WTC11 (cell line): ENCODE measurements at regions of chr1 and their contacts with region 1.

Region 1: GRCh38 chr1:17011439-17012307 is at the start of gene ATP13A2:
- DNase-seq: peak; percentile 94
- ATAC-seq: peak; percentile 85
- H3K4me3 Mint-ChIP-seq: peak within 1 kb of the TSS; percentile 85
- H3K27ac Mint-ChIP-seq: peak within 1 kb of the TSS; percentile 84
- H3K4me1 Mint-ChIP-seq: peaks cover 73% of the 10 kb centered on the region
- H3K27me3 Mint-ChIP-seq: no peaks in the 10 kb centered on the region
- CTCF ChIP-seq: no peak
- total RNA-seq, gene ATP13A2: 84.8 to 95.9 TPM (median 93.1 TPM) in 3 replicates

Region 2: GRCh38 chr1:16474166-16474800 is 537.4 kb before region 1 on chr1:
- CTCF ChIA-PET with region 1: no interaction called
- POLR2A ChIA-PET with region 1: no interaction called
- DNase-seq: no peak
- ATAC-seq: no peak
- H3K4me3 Mint-ChIP-seq: no peak overlapping the region
- H3K27ac Mint-ChIP-seq: no peak overlapping the region
- H3K4me1 Mint-ChIP-seq: no peaks in the 10 kb centered on the region
- H3K27me3 Mint-ChIP-seq: no peaks in the 10 kb centered on the region
- CTCF ChIP-seq: no peak

Region 3: GRCh38 chr1:16999863-17000262 is 11.8 kb before region 1 on chr1:
- CTCF ChIA-PET with region 1: interaction called, 15 read pairs
- POLR2A ChIA-PET with region 1: interaction called, 8 read pairs
- DNase-seq: no peak
- ATAC-seq: peak; percentile 51
- H3K4me3 Mint-ChIP-seq: no peak overlapping the region
- H3K27ac Mint-ChIP-seq: no peak overlapping the region
- H3K4me1 Mint-ChIP-seq: no peaks in the 10 kb centered on the region
- H3K27me3 Mint-ChIP-seq: no peaks in the 10 kb centered on the region
- CTCF ChIP-seq: no peak